GM10248 (cell line): ENCODE measurements at regions of chr11 and their contacts with region 1.

Region 1: GRCh38 chr11:31958076-31958735 is 132.7 kb upstream of the RCN1 start:
- DNase-seq: peak; percentile 77
- CTCF ChIP-seq: peak; percentile 89

Region 2: DNA sequence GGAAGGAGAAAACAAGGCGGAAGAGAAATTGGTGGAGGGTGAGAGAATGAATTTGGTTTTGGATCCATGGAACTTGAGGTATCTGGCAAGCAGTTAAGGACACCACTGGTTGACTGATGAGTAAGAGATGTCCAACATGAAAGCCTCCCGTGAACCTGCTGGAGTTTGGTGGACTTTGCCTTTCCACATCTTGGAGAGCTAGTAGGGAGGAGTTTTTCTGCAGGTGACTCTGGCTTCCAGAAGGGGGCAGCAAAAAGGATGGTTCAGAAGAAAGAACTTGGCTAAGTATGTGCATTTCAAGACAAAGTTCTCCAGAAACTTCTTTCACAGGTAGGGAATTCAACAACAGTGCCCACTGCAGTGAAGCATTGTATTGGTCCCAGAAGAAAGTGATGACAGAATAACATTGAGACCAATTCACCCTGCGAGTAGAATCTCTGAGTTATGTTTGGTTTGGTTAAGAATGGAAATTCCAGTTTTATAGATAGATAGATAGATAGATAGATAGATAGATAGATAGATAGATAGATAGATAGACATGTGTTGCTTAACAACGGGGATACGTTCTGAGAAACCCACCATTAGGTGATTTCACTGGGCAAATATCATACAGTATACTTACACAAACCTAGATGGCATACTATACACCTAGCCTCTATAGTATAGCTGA is 617.2 kb before region 1 on chr11:
- CTCF ChIA-PET with region 1: interaction called, 14 read pairs
- POLR2A ChIA-PET with region 1: no interaction called
- DNase-seq: peak; percentile 31
- CTCF ChIP-seq: peak; percentile 46

Region 3: DNA sequence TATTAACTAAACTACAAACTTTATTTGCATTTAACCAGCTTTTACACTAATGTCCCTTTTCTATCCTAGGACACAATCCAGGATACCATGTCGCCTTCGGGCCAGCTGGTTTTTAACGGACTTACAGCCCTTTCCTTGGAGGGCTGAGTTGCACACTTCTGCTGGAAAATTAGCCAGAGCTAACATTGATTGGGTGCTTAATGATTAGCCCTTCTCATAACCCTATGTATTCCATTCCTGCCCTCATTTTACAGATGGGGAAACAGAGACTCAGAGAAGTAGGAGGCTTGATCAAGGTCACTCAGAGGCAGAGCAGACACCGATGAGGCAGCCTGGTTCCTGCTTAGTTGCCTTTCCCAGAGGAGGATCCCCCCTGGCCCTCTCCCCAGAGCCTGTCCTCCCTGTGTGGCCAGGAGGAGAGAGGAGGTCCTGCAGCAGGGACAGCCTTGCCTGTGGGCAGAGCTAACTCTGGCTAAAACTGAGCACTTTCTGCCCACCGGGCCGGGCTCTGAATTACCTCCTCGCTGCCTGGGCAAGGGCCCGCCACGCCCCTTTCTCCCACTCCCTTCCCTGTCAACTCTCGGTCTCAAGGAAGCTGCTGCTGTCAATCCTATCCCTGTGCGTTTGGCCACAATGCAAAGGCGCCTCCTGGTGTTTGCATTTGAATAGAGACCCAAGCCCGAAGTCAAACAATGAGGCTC is 87.4 kb before region 1 on chr11:
- CTCF ChIA-PET with region 1: interaction called, 26 read pairs
- POLR2A ChIA-PET with region 1: no interaction called
- DNase-seq: peak; percentile 51
- CTCF ChIP-seq: peak; percentile 60

Region 4: DNA sequence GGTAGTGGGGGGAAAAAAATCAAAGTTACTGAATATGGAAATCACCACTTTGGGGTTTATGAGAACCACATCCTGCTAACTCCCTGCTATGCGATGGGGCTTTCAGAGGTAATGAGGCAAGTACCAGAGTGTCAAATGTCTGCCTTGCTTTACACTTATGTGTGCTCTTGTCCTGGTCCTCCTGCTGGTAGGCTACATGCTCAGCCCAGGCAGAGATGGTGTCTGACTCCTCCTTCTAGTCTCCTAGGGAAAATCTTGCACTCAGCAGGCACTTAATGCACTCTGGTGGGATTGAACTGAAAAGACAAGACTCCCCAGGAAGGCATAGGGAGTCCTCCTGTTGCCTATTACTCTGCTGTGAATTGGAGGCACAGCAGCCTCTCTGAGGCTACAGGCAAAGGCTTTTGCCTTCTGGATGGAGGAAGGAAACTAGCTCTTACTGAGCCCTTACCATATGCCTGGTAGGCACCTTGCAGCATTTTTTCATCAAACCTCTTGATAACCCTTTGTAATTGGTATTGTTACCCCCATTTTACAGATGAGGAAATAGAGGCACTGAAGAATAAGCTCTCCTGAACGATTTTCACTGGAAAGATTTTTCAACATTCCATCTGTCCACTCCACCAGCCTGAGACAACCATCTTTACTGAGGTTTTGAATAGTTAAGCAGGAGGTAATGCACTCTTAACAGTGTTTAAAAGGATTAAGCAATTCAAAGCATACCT is 15.0 kb before region 1 on chr11:
- CTCF ChIA-PET with region 1: interaction called, 88 read pairs
- POLR2A ChIA-PET with region 1: no interaction called
- DNase-seq: peak; percentile 25
- CTCF ChIP-seq: no peak

Region 5: GRCh38 chr11:31987118-31988005 is 29.2 kb after region 1 on chr11:
- CTCF ChIA-PET with region 1: interaction called, 18 read pairs
- POLR2A ChIA-PET with region 1: no interaction called
- DNase-seq: no peak
- CTCF ChIP-seq: no peak